ENCODE measurements at regions of chr2 and their contacts with region 1.

Region 1: GRCh38 chr2:44955593-44956392 is 14.3 kb downstream of the SIX3 start:
- DNase-seq: peak; percentile 30 to 73 (median 53)
- H3K4me3 ChIP-seq: no peak overlapping the region
- H3K27ac ChIP-seq: no peak overlapping the region
- H3K4me1 ChIP-seq: peaks cover 10% of the 10 kb centered on the region
- H3K27me3 ChIP-seq: no peaks in the 10 kb centered on the region
- CTCF ChIP-seq: peak in 2 of 3 donors; percentile 51 to 61
- EP300 ChIP-seq: no peak
- POLR2A ChIP-seq: no peak

Region 2: GRCh38 chr2:43051316-43051715 is 1904.5 kb before region 1 on chr2:
- intact Hi-C with region 1: no loop called
- DNase-seq: peak in 2 of 5 donors; percentile 43 to 59
- H3K4me3 ChIP-seq: no peak overlapping the region
- H3K27ac ChIP-seq: peak overlapping the region; percentile 9 to 79
- H3K4me1 ChIP-seq: peaks cover 22% of the 10 kb centered on the region
- H3K27me3 ChIP-seq: no peaks in the 10 kb centered on the region
- CTCF ChIP-seq: no peak
- EP300 ChIP-seq: no peak
- POLR2A ChIP-seq: no peak

Region 3: DNA sequence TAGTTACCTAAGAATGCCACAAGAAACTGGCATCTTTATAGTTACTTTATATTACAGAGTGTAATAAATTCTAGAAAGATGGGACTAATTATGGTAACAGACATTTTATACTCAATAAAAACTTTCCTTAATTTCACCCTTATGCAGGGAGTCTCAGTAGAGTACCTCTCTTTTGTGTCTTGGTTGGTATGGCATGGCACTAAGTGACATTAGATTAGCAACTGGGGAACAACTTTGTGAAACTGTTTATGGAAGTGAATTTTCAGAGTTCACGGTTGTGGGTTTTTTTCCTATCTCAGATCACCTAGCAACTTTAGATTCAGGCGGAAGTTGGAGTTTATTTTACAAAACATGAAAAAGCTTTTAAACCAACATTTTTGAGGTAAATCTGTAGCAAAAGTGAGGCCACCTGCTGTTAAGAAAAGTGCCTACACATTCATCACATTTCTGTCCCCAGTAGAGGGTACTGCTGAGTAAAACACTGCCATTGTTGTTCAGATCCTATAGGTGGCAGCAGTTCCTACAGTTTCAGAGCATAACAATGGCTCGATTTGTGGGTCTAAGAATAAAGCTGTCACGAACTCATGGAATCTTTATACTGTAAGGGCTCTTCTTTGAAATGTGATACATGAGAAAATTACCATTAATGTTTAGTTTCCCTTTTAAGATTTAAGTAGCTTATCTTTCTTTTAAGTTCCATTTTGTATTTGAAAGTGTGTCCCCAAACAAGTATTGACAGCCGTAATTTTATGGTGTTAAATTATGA is 476.5 kb before region 1 on chr2:
- intact Hi-C with region 1: loop called in 3 of 4 experiments (anchors 10 kb)
- DNase-seq: peak in 1 of 5 donors; percentile 15
- H3K4me3 ChIP-seq: no peak overlapping the region
- H3K27ac ChIP-seq: no peak overlapping the region
- H3K4me1 ChIP-seq: no peaks in the 10 kb centered on the region
- H3K27me3 ChIP-seq: no peaks in the 10 kb centered on the region
- CTCF ChIP-seq: peak; percentile 62 to 88 (median 86)
- EP300 ChIP-seq: no peak
- POLR2A ChIP-seq: no peak

Region 4: DNA sequence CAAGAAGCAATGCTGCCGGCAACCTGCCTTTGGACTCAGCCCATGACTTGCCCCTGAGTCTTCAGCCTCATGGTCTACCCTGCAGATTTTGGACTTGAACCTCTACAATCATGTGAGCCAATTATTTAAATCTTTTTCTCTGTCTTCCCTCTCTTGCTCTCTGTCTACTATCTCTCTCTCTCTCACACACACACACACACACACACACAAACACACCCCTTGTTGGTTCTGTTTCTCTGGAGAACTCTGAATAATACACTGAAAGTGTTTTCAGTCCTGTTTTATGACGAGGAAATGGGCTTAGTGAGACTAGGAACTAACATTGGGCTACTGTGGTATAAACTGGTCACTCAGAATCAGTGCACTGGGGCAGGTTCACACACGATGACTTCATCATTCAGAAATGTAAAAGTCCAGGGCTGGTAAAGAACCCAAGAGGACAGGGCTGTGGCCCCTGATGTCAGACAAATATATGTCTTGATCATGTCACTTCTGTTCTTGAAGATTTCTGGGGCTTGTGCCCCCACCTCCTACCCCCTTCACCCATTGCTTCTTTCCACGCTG is 319.5 kb after region 1 on chr2:
- intact Hi-C with region 1: no loop called
- DNase-seq: no peak
- H3K4me3 ChIP-seq: no peak overlapping the region
- H3K27ac ChIP-seq: no peak overlapping the region
- H3K4me1 ChIP-seq: no peaks in the 10 kb centered on the region
- H3K27me3 ChIP-seq: no peaks in the 10 kb centered on the region
- CTCF ChIP-seq: no peak
- EP300 ChIP-seq: no peak
- POLR2A ChIP-seq: no peak

Measured in ovary (tissue), 10 donors.